Stomach (tissue), 19 donors: ENCODE measurements at regions of chr9 and their contacts with region 1.

Region 1: GRCh38 chr9:23907343-23907742 is 81.3 kb upstream of the ELAVL2 start:
- DNase-seq: no peak
- H3K4me3 ChIP-seq: no peak overlapping the region
- H3K27ac ChIP-seq: no peak overlapping the region
- H3K4me1 ChIP-seq: no peaks in the 10 kb centered on the region
- H3K27me3 ChIP-seq: no peaks in the 10 kb centered on the region
- CTCF ChIP-seq: no peak
- EP300 ChIP-seq: no peak
- POLR2A ChIP-seq: no peak

Region 2: DNA sequence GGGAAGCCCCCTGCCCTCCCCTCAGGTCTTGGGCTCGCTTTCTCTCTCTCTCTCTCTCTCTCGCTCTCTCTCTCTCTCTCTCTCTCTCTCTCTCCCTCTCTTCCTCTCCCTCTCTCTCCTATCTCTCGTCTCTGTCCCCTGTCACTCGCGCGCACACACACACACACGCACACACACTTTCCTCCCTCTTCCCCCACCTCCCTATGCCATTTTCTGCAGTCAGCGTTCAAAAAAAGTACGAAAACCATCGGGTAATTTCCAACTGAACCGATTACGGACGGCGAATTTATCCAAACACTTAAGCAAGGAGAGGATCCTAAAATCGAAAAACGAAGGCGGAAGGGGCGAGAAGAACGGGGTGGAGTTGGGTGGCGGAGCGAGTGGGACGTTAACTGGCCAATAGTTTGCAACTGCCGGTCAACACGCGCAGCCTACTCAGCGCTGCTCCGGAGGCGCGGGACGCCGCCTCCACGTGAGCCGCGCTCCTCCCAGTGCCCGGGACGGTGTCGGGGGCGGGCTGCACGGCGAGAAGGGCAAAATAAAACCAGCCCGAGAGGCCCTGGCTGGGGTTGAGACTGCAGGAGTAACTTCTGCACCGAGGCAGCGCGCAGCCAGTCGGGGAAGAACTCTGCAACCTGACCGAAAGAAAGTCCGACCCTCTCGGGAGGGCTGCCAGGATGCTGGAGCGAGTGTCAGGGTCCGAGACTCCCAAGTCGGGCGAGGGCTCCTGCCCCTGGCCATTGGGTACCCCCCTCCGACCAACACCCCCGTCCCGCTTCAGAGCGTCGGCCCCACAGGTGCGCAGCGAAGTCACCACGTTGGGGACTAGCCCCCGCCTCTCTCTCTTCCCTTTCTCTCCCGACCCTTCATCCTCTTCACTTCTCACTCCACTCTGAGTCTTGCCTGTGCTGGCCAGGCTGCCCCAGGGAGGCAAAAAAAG is 56.4 kb before region 1 on chr9:
- intact Hi-C with region 1: loop called (anchors 10 kb)
- DNase-seq: peak in 1 of 2 donors; percentile 62
- H3K4me3 ChIP-seq: peak overlapping the region; percentile 23 to 49 (median 39)
- H3K27ac ChIP-seq: no peak overlapping the region
- H3K4me1 ChIP-seq: peaks cover 0 to 23% (median 12%) of the 10 kb centered on the region in 4 donors
- H3K27me3 ChIP-seq: peaks cover 0 to 55% (median 24%) of the 10 kb centered on the region in 3 donors
- CTCF ChIP-seq: no peak
- EP300 ChIP-seq: no peak
- POLR2A ChIP-seq: no peak